ENCODE measurements at regions of chr18 and their contacts with region 1.

Region 1: GRCh38 chr18:2932247-2933181 is 80.4 kb downstream of the LPIN2 start:
- DNase-seq: peak; percentile 76
- CTCF ChIP-seq: peak; percentile 63

Region 2: GRCh38 chr18:2985628-2986027 is 53.1 kb after region 1 on chr18:
- in situ Hi-C with region 1: loop called (anchors 5 kb)
- DNase-seq: peak; percentile 40
- CTCF ChIP-seq: peak; percentile 65

Region 3: GRCh38 chr18:3151399-3152264 is 219.1 kb after region 1 on chr18:
- in situ Hi-C with region 1: loop called (anchors 10 kb)
- DNase-seq: peak; percentile 66
- CTCF ChIP-seq: peak; percentile 70

Region 4: GRCh38 chr18:3245853-3246634 is 313.5 kb after region 1 on chr18:
- in situ Hi-C with region 1: loop called (anchors 10 kb)
- DNase-seq: peak; percentile 75
- CTCF ChIP-seq: peak; percentile 98

Measured in GM13977 (cell line).